Activated CD8-positive, alpha-beta T cell treated with anti-CD3 and anti-CD28 coated beads for 36 hours (primary cell): ENCODE measurements at regions of chr20 and their contacts with region 1.

Region 1: DNA sequence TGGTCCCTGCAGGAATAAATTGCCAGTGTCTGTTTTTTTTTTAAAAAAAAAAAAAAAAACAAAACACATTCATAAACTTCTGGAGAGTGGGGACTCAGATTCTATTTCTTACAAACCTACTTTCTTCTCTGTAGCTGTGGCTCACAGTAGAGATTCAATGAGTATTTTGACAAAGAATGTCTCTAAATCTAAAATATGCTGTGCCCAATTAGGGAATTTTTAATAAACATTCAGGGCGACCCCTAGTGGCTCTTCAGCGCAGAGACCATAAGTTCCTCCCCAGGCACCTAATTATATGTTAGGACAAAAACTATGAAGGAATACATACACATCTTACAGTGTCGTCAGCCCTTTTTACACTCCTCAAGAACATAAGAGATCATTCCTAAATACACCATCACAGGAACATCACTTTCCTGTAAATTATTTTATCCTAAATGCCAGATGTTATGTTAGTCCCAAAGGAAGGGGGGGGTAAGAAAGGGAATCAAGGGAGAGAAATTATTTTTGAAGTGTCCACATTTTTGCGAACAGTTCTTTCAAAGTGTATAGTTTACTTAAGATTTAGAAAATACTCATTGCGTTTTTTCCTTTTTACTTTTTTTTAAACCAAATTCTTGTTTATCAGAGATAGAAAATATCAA is 21.8 kb upstream of the NAA20 start:
- DNase-seq: peak; percentile 48
- ATAC-seq: no peak
- H3K4me3 Mint-ChIP-seq: no peak overlapping the region
- H3K27ac Mint-ChIP-seq: no peak overlapping the region
- H3K4me1 Mint-ChIP-seq: no peaks in the 10 kb centered on the region
- H3K27me3 Mint-ChIP-seq: peaks cover 4% of the 10 kb centered on the region
- CTCF ChIP-seq: peak; percentile 74

Region 2: GRCh38 chr20:19692685-19693119 is 302.6 kb before region 1 on chr20:
- CTCF ChIA-PET with region 1: no interaction called
- POLR2A ChIA-PET with region 1: no interaction called
- intact Hi-C with region 1: loop called (anchors 10 kb)
- DNase-seq: peak; percentile 61
- ATAC-seq: no peak
- H3K4me3 Mint-ChIP-seq: no peak overlapping the region
- H3K27ac Mint-ChIP-seq: no peak overlapping the region
- H3K4me1 Mint-ChIP-seq: peaks cover 3% of the 10 kb centered on the region
- H3K27me3 Mint-ChIP-seq: peaks cover 8% of the 10 kb centered on the region
- CTCF ChIP-seq: peak; percentile 93

Region 3: GRCh38 chr20:19784511-19785172 is 210.7 kb before region 1 on chr20:
- CTCF ChIA-PET with region 1: interaction called, 14 read pairs
- POLR2A ChIA-PET with region 1: no interaction called
- intact Hi-C with region 1: loop called (anchors 2 kb)
- DNase-seq: peak; percentile 56
- ATAC-seq: peak; percentile 56
- H3K4me3 Mint-ChIP-seq: no peak overlapping the region
- H3K27ac Mint-ChIP-seq: no peak overlapping the region
- H3K4me1 Mint-ChIP-seq: peaks cover 2% of the 10 kb centered on the region
- H3K27me3 Mint-ChIP-seq: peaks cover 10% of the 10 kb centered on the region
- CTCF ChIP-seq: peak; percentile 78

Region 4: DNA sequence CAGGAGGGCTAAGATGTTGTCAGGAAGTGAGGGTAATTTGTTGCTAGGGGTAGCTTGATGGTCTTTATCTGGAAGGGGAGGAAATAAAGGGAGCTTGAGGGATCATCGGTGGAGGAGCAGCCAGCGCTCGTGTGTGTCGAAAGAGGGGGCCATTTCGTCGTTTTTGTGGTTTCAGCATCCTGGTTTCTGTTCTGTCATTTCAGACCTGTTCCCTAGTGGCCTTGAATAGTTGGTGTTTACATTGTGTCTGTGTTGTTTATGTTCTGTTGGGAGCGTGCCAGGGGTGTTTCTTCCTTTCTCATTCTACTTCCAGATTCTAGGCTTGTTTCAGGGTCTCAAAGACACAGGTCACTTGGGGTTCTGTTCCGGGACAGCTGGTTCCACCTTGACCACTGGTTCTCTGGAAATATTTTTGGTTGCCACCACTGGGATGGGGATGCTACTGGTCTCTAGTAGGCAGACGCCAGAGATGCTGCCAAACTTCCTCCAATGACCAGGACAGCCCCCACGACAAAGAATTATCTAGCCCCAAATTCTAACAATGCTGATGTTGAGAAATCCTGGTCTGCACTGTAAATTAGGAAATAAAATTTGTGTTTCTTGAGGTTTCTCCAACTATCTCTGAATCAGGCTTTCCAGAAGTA is 92.1 kb before region 1 on chr20:
- CTCF ChIA-PET with region 1: no interaction called
- POLR2A ChIA-PET with region 1: no interaction called
- intact Hi-C with region 1: no loop called
- DNase-seq: peak; percentile 13
- ATAC-seq: no peak
- H3K4me3 Mint-ChIP-seq: no peak overlapping the region
- H3K27ac Mint-ChIP-seq: no peak overlapping the region
- H3K4me1 Mint-ChIP-seq: no peaks in the 10 kb centered on the region
- H3K27me3 Mint-ChIP-seq: peaks cover 6% of the 10 kb centered on the region
- CTCF ChIP-seq: no peak

Region 5: GRCh38 chr20:20237093-20237959 is 242.0 kb after region 1 on chr20:
- CTCF ChIA-PET with region 1: no interaction called
- POLR2A ChIA-PET with region 1: no interaction called
- intact Hi-C with region 1: no loop called
- DNase-seq: peak; percentile 48
- ATAC-seq: peak; percentile 79
- H3K4me3 Mint-ChIP-seq: no peak overlapping the region
- H3K27ac Mint-ChIP-seq: no peak overlapping the region
- H3K4me1 Mint-ChIP-seq: no peaks in the 10 kb centered on the region
- H3K27me3 Mint-ChIP-seq: peaks cover 6% of the 10 kb centered on the region
- CTCF ChIP-seq: peak; percentile 58